ENCODE measurements at regions of chr4 and their contacts with region 1.

Region 1: GRCh38 chr4:47071858-47072441 is 40.6 kb downstream of the GABRB1 start:
- DNase-seq: no peak
- H3K4me3 ChIP-seq: no peak overlapping the region
- H3K27ac ChIP-seq: no peak overlapping the region
- H3K4me1 ChIP-seq: no peaks in the 10 kb centered on the region
- H3K27me3 ChIP-seq: no peaks in the 10 kb centered on the region
- CTCF ChIP-seq: no peak
- EP300 ChIP-seq: no peak
- POLR2A ChIP-seq: no peak

Region 2: GRCh38 chr4:47049347-47049746 is 22.6 kb before region 1 on chr4:
- in situ Hi-C with region 1: no loop called
- intact Hi-C with region 1: loop called (anchors 1 kb)
- DNase-seq: no peak
- H3K4me3 ChIP-seq: no peak overlapping the region
- H3K27ac ChIP-seq: no peak overlapping the region
- H3K4me1 ChIP-seq: peaks cover 0 to 20% (median 2%) of the 10 kb centered on the region in 4 donors
- H3K27me3 ChIP-seq: no peaks in the 10 kb centered on the region
- CTCF ChIP-seq: no peak
- EP300 ChIP-seq: no peak
- POLR2A ChIP-seq: no peak

Measured in transverse colon (tissue), 4 donors.